Naive thymus-derived CD4-positive, alpha-beta T cell (primary cell): ENCODE measurements at regions of chr6 and their contacts with region 1.

Region 1: DNA sequence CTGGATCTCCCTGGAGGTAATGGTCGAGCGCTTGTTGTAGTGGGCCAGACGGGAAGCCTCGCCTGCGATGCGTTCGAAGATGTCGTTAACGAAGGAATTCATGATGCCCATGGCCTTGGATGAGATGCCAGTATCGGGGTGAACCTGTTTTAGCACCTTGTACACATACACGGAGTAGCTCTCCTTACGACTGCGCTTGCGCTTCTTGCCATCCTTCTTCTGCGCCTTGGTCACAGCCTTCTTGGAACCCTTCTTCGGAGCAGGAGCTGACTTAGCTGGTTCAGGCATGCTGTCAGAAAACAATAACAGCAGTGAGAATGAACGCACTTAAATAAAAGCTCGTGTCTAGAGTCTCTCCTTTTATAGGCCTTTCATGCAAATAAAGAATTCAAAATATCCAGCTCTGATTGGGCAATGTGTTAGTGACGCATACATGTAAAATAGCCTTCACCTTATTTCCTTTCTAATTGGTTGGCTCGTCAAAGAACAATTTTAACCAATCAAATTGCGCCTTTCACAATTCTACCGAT is 129.2 kb downstream of the HFE start:
- DNase-seq: peak; percentile 56 to 97 (median 93)
- ATAC-seq: peak; percentile 86
- H3K4me3 ChIP-seq: peak overlapping the region; percentile 72
- H3K4me3 Mint-ChIP-seq: no peak overlapping the region
- H3K27ac ChIP-seq: peak overlapping the region; percentile 84
- H3K27ac Mint-ChIP-seq: no peak overlapping the region
- H3K4me1 ChIP-seq: peaks cover 12 to 18% of the 10 kb centered on the region in 2 donors
- H3K4me1 Mint-ChIP-seq: peaks cover 3 to 31% (median 10%) of the 10 kb centered on the region in 7 donors
- H3K27me3 ChIP-seq: no peaks in the 10 kb centered on the region
- H3K27me3 Mint-ChIP-seq: no peaks in the 10 kb centered on the region

Region 2: DNA sequence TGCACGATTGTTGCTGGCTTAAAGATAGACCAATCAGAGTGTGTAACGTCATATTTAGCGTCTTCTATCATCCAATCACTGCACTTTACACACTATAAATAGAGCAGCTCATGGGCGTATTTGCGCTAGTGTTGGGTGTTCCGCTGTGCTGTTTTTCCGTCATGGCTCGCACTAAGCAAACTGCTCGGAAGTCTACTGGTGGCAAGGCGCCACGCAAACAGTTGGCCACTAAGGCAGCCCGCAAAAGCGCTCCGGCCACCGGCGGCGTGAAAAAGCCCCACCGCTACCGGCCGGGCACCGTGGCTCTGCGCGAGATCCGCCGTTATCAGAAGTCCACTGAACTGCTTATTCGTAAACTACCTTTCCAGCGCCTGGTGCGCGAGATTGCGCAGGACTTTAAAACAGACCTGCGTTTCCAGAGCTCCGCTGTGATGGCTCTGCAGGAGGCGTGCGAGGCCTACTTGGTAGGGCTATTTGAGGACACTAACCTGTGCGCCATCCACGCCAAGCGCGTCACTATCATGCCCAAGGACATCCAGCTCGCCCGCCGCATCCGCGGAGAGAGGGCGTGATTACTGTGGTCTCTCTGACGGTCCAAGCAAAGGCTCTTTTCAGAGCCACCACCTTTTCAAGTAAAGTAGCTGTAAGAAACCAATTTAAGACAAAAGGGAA is 196.0 kb before region 1 on chr6:
- CTCF ChIA-PET with region 1: no interaction called
- POLR2A ChIA-PET with region 1: interaction called, 44 read pairs
- intact Hi-C with region 1: no loop called
- DNase-seq: peak; percentile 68 to 94 (median 91)
- ATAC-seq: peak; percentile 66
- H3K4me3 ChIP-seq: peak overlapping the region; percentile 96
- H3K4me3 Mint-ChIP-seq: peak overlapping the region; percentile 82 to 100 (median 94)
- H3K27ac ChIP-seq: peak overlapping the region; percentile 97
- H3K27ac Mint-ChIP-seq: peak overlapping the region; percentile 95 to 100 (median 100)
- H3K4me1 ChIP-seq: peaks cover 0 to 10% of the 10 kb centered on the region in 2 donors
- H3K4me1 Mint-ChIP-seq: peaks cover 10 to 62% (median 45%) of the 10 kb centered on the region in 7 donors
- H3K27me3 ChIP-seq: no peaks in the 10 kb centered on the region
- H3K27me3 Mint-ChIP-seq: peaks cover 0 to 6% (median 0%) of the 10 kb centered on the region in 5 donors

Region 3: DNA sequence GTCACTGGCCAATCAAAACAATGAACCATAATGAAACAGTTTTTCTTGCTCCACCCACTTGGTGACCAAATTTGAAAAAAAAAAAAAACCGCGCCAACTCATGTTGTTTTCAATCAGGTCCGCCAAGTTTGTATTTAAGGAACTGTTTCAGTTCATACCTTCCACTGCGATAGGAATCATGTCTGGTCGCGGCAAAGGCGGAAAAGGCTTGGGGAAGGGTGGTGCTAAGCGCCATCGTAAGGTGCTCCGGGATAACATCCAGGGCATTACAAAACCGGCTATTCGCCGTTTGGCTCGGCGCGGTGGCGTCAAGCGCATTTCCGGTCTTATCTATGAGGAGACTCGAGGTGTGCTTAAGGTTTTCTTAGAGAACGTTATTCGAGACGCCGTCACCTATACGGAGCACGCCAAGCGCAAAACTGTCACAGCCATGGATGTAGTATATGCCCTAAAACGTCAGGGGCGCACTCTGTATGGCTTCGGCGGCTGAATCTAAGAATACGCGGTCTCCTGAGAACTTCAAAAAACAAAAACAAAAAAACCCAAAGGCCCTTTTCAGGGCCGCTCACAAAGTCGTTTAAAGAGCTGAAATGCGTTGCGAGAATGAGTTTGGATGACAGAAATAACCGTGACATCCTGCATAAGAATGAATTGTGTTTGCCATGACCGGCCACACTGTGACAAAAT is 112.5 kb before region 1 on chr6:
- CTCF ChIA-PET with region 1: no interaction called
- POLR2A ChIA-PET with region 1: interaction called, 18 read pairs
- intact Hi-C with region 1: loop called (anchors 1 to 5 kb)
- DNase-seq: peak; percentile 83 to 96 (median 95)
- ATAC-seq: peak; percentile 94
- H3K4me3 ChIP-seq: peak overlapping the region; percentile 40
- H3K4me3 Mint-ChIP-seq: peak overlapping the region; percentile 81 to 97 (median 89)
- H3K27ac ChIP-seq: peak overlapping the region; percentile 75
- H3K27ac Mint-ChIP-seq: peak overlapping the region; percentile 96 to 100 (median 98)
- H3K4me1 ChIP-seq: peaks cover 4 to 12% of the 10 kb centered on the region in 2 donors
- H3K4me1 Mint-ChIP-seq: peaks cover 7 to 25% (median 22%) of the 10 kb centered on the region in 7 donors
- H3K27me3 ChIP-seq: no peaks in the 10 kb centered on the region
- H3K27me3 Mint-ChIP-seq: peaks cover 0 to 3% (median 0%) of the 10 kb centered on the region in 5 donors

Region 4: DNA sequence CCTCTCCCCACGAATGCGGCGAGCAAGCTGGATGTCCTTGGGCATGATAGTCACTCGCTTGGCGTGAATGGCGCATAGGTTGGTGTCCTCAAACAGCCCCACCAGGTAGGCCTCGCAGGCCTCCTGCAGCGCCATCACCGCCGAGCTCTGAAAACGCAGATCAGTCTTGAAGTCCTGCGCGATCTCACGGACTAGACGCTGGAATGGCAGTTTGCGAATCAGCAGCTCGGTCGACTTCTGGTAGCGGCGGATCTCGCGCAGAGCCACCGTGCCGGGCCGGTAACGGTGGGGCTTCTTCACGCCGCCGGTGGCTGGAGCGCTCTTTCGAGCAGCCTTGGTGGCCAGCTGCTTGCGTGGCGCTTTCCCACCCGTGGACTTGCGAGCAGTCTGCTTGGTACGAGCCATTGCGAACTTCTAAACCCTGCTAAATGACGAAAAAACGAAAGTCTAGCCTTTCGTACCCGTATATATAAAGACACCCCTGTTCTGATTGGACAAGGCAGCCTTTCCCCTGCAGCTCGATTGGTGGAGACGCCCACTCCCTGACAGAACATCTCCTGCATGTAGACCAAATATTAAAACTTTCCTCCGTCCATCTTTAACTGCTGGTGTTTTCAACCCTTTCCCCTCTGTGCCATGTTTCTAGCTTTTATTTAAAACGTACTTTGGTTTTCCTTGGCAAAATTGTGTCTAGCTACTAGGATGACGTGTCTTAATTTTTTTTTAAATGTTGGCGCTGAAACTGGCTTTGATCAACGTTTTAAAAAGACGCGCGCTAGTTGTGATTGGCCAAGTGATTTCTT is 19.4 kb before region 1 on chr6:
- CTCF ChIA-PET with region 1: interaction called, 18 read pairs
- POLR2A ChIA-PET with region 1: interaction called, 3,606 read pairs
- intact Hi-C with region 1: loop called (anchors 1 kb)
- DNase-seq: peak; percentile 55 to 95 (median 93)
- ATAC-seq: peak; percentile 73
- H3K4me3 ChIP-seq: peak overlapping the region; percentile 92
- H3K4me3 Mint-ChIP-seq: peak overlapping the region; percentile 85 to 99 (median 96)
- H3K27ac ChIP-seq: peak overlapping the region; percentile 91
- H3K27ac Mint-ChIP-seq: peak overlapping the region; percentile 96 to 100 (median 98)
- H3K4me1 ChIP-seq: peaks cover 10 to 12% of the 10 kb centered on the region in 2 donors
- H3K4me1 Mint-ChIP-seq: peaks cover 23 to 65% (median 42%) of the 10 kb centered on the region in 7 donors
- H3K27me3 ChIP-seq: no peaks in the 10 kb centered on the region
- H3K27me3 Mint-ChIP-seq: peaks cover 0 to 12% (median 0%) of the 10 kb centered on the region in 5 donors

Region 5: DNA sequence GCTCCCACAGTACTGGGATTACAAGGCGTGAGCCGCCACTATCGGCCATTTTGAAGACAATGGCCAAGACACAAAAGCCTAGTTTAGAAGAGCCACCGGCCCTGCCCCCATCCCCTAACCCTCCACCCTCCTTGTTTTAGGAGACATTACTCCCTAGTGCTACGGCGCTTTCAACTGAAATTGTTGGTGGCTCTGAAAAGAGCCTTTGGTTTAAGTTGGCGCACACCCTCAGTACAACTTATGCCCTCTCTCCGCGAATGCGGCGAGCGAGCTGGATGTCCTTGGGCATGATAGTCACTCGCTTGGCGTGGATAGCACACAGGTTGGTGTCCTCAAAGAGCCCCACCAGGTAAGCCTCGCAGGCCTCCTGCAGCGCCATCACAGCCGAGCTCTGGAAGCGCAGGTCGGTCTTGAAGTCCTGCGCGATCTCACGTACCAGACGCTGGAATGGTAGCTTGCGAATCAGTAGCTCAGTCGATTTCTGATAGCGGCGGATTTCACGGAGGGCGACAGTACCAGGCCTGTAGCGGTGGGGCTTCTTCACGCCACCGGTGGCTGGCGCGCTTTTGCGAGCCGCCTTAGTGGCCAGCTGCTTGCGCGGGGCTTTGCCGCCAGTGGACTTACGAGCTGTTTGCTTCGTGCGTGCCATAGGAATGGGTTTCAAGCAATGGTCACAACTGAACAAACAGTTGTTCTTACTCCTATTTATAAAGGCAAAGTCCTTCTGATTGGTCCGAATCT is 33.7 kb after region 1 on chr6:
- CTCF ChIA-PET with region 1: interaction called, 22 read pairs
- POLR2A ChIA-PET with region 1: interaction called, 35 read pairs
- intact Hi-C with region 1: loop called (anchors 1 kb)
- DNase-seq: peak; percentile 53 to 85 (median 80)
- ATAC-seq: peak; percentile 85
- H3K4me3 ChIP-seq: peak overlapping the region; percentile 84
- H3K4me3 Mint-ChIP-seq: peak overlapping the region; percentile 88 to 100 (median 96)
- H3K27ac ChIP-seq: peak overlapping the region; percentile 71
- H3K27ac Mint-ChIP-seq: peak overlapping the region; percentile 85 to 97 (median 94)
- H3K4me1 ChIP-seq: peaks cover 4 to 19% of the 10 kb centered on the region in 2 donors
- H3K4me1 Mint-ChIP-seq: peaks cover 20 to 48% (median 39%) of the 10 kb centered on the region in 7 donors
- H3K27me3 ChIP-seq: no peaks in the 10 kb centered on the region
- H3K27me3 Mint-ChIP-seq: no peaks in the 10 kb centered on the region

Region 6: GRCh38 chr6:26322645-26323482 is 106.4 kb after region 1 on chr6:
- CTCF ChIA-PET with region 1: no interaction called
- POLR2A ChIA-PET with region 1: interaction called, 20 read pairs
- intact Hi-C with region 1: no loop called
- DNase-seq: peak in 8 of 9 donors; percentile 67 to 85 (median 79)
- ATAC-seq: peak; percentile 72
- H3K4me3 ChIP-seq: peak overlapping the region; percentile 82
- H3K4me3 Mint-ChIP-seq: peak overlapping the region; percentile 64 to 92 (median 88)
- H3K27ac ChIP-seq: peak overlapping the region; percentile 60
- H3K27ac Mint-ChIP-seq: peak overlapping the region; percentile 44 to 93 (median 89)
- H3K4me1 ChIP-seq: peaks cover 5 to 8% of the 10 kb centered on the region in 2 donors
- H3K4me1 Mint-ChIP-seq: peaks cover 2 to 58% (median 36%) of the 10 kb centered on the region in 7 donors
- H3K27me3 ChIP-seq: no peaks in the 10 kb centered on the region
- H3K27me3 Mint-ChIP-seq: peaks cover 5 to 21% (median 17%) of the 10 kb centered on the region in 5 donors

Region 7: DNA sequence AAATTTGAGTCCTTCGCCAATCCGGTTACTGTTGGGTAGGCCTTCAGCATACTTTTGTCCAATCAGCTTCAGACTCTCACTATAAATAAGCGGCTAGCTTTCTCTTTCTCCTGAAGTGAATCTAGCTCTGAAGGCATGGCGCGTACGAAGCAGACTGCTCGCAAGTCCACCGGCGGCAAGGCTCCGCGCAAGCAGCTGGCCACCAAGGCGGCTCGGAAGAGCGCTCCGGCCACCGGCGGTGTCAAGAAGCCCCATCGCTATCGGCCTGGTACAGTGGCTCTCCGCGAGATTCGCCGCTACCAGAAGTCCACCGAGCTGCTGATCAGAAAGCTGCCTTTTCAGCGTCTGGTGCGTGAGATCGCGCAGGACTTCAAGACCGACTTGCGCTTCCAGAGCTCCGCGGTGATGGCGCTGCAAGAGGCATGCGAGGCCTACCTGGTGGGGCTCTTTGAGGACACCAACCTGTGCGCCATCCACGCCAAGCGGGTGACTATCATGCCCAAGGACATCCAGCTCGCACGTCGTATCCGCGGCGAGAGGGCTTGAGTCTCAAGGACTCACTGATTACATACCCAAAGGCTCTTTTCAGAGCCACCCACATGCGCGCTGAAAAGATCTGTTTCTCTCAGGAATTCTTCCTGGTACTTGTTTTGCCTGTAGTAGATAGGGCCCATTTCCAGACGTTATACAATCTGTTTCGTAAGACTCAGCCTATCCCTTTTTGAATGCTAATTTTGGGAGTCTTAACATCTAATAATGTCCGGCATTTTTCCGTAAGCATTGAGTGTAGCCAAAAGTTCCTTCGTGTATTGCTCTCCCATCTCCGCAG is 1593.7 kb after region 1 on chr6:
- CTCF ChIA-PET with region 1: no interaction called
- POLR2A ChIA-PET with region 1: interaction called, 21 read pairs
- intact Hi-C with region 1: no loop called
- DNase-seq: peak; percentile 66 to 96 (median 92)
- ATAC-seq: peak; percentile 71
- H3K4me3 ChIP-seq: peak overlapping the region; percentile 76
- H3K4me3 Mint-ChIP-seq: peak overlapping the region; percentile 81 to 97 (median 94)
- H3K27ac ChIP-seq: peak overlapping the region; percentile 86
- H3K27ac Mint-ChIP-seq: peak overlapping the region; percentile 95 to 99 (median 98)
- H3K4me1 ChIP-seq: peaks cover 20 to 42% of the 10 kb centered on the region in 2 donors
- H3K4me1 Mint-ChIP-seq: peaks cover 18 to 82% (median 61%) of the 10 kb centered on the region in 7 donors
- H3K27me3 ChIP-seq: no peaks in the 10 kb centered on the region
- H3K27me3 Mint-ChIP-seq: peaks cover 0 to 9% (median 0%) of the 10 kb centered on the region in 5 donors